Colonic mucosa (tissue), 4 donors: ENCODE measurements at regions of chr14 and their contacts with region 1.

Region 1: GRCh38 chr14:77554207-77554606 is 55.6 kb upstream of the ISM2 start:
- DNase-seq: no peak
- H3K4me3 ChIP-seq: no peak overlapping the region
- H3K27ac ChIP-seq: no peak overlapping the region
- H3K4me1 ChIP-seq: no peaks in the 10 kb centered on the region
- H3K27me3 ChIP-seq: no peaks in the 10 kb centered on the region
- CTCF ChIP-seq: no peak

Region 2: DNA sequence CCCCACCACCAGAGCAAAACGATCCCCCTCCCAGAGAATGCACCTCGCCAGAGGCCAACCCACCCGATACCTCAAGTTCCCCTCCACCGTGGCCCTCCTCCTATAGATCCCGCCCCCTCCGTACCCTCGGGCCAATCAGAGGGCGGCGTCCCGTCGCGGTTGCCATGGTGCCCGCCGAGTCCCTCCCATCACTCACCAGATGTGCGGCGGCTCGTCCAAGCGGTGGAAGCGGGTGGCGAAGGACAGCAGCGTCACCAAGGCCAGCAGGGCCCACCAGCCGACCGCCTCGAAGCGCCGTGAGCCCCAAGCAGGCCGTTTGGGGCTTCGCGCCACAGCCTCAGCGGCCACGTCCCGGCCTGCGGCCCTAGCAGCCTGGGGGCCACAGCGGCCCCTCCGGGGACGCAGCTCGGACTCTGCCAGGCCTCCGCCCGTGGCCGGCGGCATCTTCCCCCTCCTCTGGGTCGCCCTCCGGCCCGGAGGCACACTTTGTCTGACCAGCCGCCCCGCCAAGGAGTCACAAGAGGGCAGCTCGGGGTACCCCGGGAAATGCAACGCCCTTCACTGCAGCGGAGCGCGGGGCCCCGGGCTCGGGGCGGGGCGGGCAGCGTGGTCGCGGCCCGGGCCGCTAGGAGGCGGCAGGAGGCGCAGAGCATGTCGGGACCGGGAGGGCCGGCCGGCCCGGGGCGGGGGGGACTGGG is 233.8 kb before region 1 on chr14 and contains the start of gene POMT2:
- intact Hi-C with region 1: loop called (anchors 10 kb)
- DNase-seq: peak; percentile 96
- H3K4me3 ChIP-seq: peak within 1 kb of the TSS; percentile 100
- H3K27ac ChIP-seq: peak within 1 kb of the TSS; percentile 98
- H3K4me1 ChIP-seq: peaks cover 6% of the 10 kb centered on the region
- H3K27me3 ChIP-seq: no peaks in the 10 kb centered on the region
- CTCF ChIP-seq: peak; percentile 23
- total RNA-seq, gene POMT2: 13.0 to 37.7 TPM

Region 3: DNA sequence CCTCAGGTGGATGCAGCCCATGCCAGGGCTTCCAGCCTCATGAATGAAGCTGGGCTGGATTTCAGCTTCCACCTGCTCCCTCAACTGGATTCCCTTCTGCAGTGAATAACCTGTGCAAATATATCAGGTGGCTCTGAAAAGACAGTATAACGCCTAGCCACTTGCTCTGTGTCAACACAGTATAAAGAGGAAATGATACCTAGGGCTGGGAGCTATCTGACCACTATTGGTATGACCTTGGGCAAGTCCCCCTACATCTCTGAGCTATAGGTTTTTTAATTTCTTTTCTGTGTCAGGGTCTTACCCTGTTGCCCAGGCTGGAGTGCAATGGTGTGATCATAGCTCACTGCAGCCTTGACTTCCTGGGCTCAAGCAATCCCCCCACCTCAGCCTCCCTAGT is 75.4 kb before region 1 on chr14:
- intact Hi-C with region 1: no loop called
- DNase-seq: no peak
- H3K4me3 ChIP-seq: no peak overlapping the region
- H3K27ac ChIP-seq: no peak overlapping the region
- H3K4me1 ChIP-seq: no peaks in the 10 kb centered on the region
- H3K27me3 ChIP-seq: no peaks in the 10 kb centered on the region
- CTCF ChIP-seq: no peak